Activated CD4-positive, alpha-beta memory T cell treated with anti-CD3 and anti-CD28 coated beads for 36 hours (primary cell): ENCODE measurements at regions of chr11 and their contacts with region 1.

Region 1: DNA sequence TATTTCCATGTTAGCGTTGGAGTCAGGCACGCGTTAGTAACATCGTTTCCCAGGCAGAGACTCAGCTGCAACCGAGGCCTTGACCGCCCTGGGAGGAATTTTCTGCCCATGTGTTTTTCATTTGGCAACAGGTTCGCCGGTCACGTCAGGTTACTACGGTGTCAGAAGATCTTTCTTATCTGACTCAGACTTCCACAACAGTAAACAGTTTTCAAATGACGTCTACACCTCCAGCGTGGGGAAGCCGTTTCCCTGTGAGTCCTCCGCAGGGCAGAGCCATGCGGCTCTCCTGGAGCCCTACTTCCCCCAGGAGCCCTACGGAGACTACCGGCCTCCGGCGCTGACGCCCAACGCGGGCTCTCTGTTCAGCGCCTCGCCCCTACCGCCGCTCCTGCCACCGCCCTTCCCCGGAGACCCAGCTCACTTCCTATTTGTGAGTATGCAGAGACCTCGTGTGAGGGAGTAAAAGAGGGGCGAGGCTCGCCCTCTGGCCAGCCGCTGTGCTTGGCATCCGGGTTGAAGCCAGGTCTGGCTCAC is 14.3 kb upstream of the POU2AF3 start:
- DNase-seq: no peak
- H3K4me3 Mint-ChIP-seq: no peak overlapping the region
- H3K27ac Mint-ChIP-seq: no peak overlapping the region
- H3K4me1 Mint-ChIP-seq: no peaks in the 10 kb centered on the region
- H3K27me3 Mint-ChIP-seq: peaks cover 2% of the 10 kb centered on the region

Region 2: DNA sequence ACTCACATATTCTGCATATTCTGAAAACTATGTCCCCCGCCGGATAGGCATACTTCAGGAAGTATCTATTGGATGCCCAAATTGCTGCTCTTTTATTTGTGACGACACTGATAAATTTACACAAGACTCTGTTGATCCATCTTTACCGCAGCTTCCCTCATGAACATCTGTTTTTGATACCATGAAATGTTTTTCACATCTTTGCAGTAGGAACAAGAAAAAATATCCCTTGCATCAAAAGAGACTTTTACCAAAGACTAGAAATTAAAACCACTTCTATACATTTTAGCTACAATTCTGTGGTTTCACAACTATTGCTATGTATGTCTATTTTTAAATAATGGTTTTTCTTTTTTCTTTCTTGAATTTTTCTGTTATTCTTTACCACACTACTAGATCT is 23.2 kb before region 1 on chr11:
- CTCF ChIA-PET with region 1: interaction called, 22 read pairs
- POLR2A ChIA-PET with region 1: no interaction called
- intact Hi-C with region 1: no loop called
- DNase-seq: no peak
- H3K4me3 Mint-ChIP-seq: no peak overlapping the region
- H3K27ac Mint-ChIP-seq: no peak overlapping the region
- H3K4me1 Mint-ChIP-seq: no peaks in the 10 kb centered on the region
- H3K27me3 Mint-ChIP-seq: peaks cover 24% of the 10 kb centered on the region

Region 3: GRCh38 chr11:111359223-111360149 is 75.5 kb after region 1 on chr11:
- CTCF ChIA-PET with region 1: interaction called, 4 read pairs
- POLR2A ChIA-PET with region 1: no interaction called
- intact Hi-C with region 1: loop called (anchors 10 kb)
- DNase-seq: peak; percentile 22
- H3K4me3 Mint-ChIP-seq: no peak overlapping the region
- H3K27ac Mint-ChIP-seq: no peak overlapping the region
- H3K4me1 Mint-ChIP-seq: peaks cover 4% of the 10 kb centered on the region
- H3K27me3 Mint-ChIP-seq: no peaks in the 10 kb centered on the region

Region 4: DNA sequence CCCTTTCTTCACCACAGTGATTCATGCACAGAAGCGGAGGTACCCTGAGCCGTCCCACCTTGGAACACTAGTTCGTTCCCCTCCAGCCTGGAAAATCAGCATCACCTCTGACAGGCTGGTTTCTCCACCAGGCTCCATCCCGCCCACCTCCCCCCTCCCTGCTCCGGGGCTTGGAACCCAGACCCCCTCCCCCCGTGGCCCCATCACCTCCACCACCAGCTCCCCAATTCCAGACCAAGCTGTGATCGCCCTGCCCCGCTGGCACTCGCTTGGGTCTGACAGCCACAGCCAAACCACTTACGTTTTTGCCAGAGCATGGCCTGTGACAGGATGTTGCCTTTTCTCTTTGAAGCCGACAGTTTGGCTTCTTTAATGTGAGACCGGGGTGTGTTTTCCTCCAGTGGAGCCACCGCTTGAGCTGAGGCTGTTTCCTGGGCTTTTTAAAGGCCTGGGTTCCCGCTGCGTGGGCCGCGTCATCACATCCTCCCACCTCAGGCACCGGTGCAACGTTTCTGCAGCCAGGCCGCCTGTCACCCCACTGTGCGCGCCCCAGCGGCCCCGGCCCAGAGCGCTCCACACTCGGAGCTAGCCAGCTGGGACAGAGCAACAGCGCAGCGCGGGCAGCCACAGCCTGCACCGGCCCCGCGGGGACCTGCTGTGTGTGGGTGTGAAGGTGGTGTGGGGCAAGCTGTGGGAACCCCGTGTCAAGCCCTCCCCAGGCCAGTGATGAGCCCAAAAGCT is 95.0 kb after region 1 on chr11 and contains the start of gene POU2AF1:
- CTCF ChIA-PET with region 1: no interaction called
- POLR2A ChIA-PET with region 1: no interaction called
- intact Hi-C with region 1: loop called (anchors 1 kb)
- DNase-seq: peak; percentile 88
- H3K4me3 Mint-ChIP-seq: peak within 1 kb of the TSS; percentile 62
- H3K27ac Mint-ChIP-seq: peak within 1 kb of the TSS; percentile 86
- H3K4me1 Mint-ChIP-seq: peaks cover 51% of the 10 kb centered on the region
- H3K27me3 Mint-ChIP-seq: no peaks in the 10 kb centered on the region
- total RNA-seq, gene POU2AF1: 26.9 to 28.3 TPM

Region 5: DNA sequence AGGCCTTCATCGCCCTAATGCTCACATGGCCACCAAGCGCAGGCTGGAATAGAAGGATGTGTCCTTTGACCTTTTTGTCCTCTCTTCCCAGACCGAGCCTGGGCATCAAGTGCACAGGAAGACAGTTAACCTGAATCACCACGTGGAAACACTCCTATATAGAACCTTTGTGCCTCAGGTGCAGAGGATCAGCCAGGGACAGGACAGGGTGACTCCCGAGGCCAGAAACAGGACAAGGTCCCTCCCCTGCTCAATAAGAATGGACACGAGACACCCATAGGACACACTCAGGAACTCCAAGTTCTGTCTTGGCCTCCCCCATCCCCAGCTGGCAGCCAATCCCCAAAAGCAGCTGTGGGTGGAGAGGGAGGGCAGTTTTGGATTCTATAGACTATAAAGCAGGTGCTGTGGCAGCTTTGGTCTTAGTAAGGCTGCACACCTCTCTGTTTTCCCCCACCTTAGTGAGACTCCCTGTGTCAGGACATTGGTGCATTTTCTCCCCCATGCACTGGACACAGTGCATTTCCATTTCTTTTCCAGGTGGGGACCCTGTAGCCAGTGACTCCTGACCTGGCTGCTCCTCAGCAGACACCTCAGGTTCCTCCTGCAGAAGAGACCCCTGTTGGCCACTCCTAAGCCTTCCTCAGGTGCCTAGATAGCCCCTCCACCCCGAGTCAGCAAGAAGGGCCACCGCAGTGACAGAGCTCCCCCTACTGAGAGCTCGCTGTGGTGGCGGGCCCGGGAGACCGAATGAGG is 138.7 kb after region 1 on chr11:
- CTCF ChIA-PET with region 1: interaction called, 359 read pairs
- POLR2A ChIA-PET with region 1: no interaction called
- intact Hi-C with region 1: loop called (anchors 1 kb)
- DNase-seq: peak; percentile 73
- H3K4me3 Mint-ChIP-seq: no peak overlapping the region
- H3K27ac Mint-ChIP-seq: no peak overlapping the region
- H3K4me1 Mint-ChIP-seq: peaks cover 4% of the 10 kb centered on the region
- H3K27me3 Mint-ChIP-seq: no peaks in the 10 kb centered on the region

Region 6: GRCh38 chr11:111429066-111429506 is 145.1 kb after region 1 on chr11:
- CTCF ChIA-PET with region 1: interaction called, 359 read pairs
- POLR2A ChIA-PET with region 1: no interaction called
- intact Hi-C with region 1: loop called (anchors 1 kb)
- DNase-seq: peak; percentile 82
- H3K4me3 Mint-ChIP-seq: no peak overlapping the region
- H3K27ac Mint-ChIP-seq: no peak overlapping the region
- H3K4me1 Mint-ChIP-seq: peaks cover 2% of the 10 kb centered on the region
- H3K27me3 Mint-ChIP-seq: peaks cover 3% of the 10 kb centered on the region

Region 7: GRCh38 chr11:111446404-111447111 is 162.5 kb after region 1 on chr11:
- CTCF ChIA-PET with region 1: interaction called, 107 read pairs
- POLR2A ChIA-PET with region 1: interaction called, 4 read pairs
- intact Hi-C with region 1: loop called (anchors 1 kb)
- DNase-seq: peak; percentile 84
- H3K4me3 Mint-ChIP-seq: no peak overlapping the region
- H3K27ac Mint-ChIP-seq: peak overlapping the region; percentile 56
- H3K4me1 Mint-ChIP-seq: peaks cover 14% of the 10 kb centered on the region
- H3K27me3 Mint-ChIP-seq: no peaks in the 10 kb centered on the region

Region 8: GRCh38 chr11:111500481-111500880 is 216.5 kb after region 1 on chr11:
- CTCF ChIA-PET with region 1: no interaction called
- POLR2A ChIA-PET with region 1: no interaction called
- intact Hi-C with region 1: no loop called
- DNase-seq: no peak
- H3K4me3 Mint-ChIP-seq: no peak overlapping the region
- H3K27ac Mint-ChIP-seq: no peak overlapping the region
- H3K4me1 Mint-ChIP-seq: no peaks in the 10 kb centered on the region
- H3K27me3 Mint-ChIP-seq: peaks cover 32% of the 10 kb centered on the region